GM12878 (cell line): ENCODE measurements at regions of chr17 and their contacts with region 1.

Region 1: GRCh38 chr17:7444682-7445618 is at the start of gene CHRNB1:
- DNase-seq: no peak
- ATAC-seq: peak; percentile 71
- H3K4me3 ChIP-seq: peak within 1 kb of the TSS; percentile 55; the same call in 1 of the 2 replicates
- H3K27ac ChIP-seq: no peak within 1 kb of the TSS
- H3K4me1 ChIP-seq: peaks cover 16% of the 10 kb centered on the region
- H3K27me3 ChIP-seq: peaks cover 1 to 5% of the 10 kb centered on the region in 2 experiments; a peak in 3 of 4 replicates
- CTCF ChIP-seq: peak in 1 of 3 experiments; percentile 11; a peak in 1 of 6 replicates
- EP300 ChIP-seq: no peak
- POLR2A ChIP-seq: no peak
- RAD21 ChIP-seq: no peak
- polyA plus RNA-seq, gene CHRNB1: 13.2 to 14.8 TPM

Region 2: DNA sequence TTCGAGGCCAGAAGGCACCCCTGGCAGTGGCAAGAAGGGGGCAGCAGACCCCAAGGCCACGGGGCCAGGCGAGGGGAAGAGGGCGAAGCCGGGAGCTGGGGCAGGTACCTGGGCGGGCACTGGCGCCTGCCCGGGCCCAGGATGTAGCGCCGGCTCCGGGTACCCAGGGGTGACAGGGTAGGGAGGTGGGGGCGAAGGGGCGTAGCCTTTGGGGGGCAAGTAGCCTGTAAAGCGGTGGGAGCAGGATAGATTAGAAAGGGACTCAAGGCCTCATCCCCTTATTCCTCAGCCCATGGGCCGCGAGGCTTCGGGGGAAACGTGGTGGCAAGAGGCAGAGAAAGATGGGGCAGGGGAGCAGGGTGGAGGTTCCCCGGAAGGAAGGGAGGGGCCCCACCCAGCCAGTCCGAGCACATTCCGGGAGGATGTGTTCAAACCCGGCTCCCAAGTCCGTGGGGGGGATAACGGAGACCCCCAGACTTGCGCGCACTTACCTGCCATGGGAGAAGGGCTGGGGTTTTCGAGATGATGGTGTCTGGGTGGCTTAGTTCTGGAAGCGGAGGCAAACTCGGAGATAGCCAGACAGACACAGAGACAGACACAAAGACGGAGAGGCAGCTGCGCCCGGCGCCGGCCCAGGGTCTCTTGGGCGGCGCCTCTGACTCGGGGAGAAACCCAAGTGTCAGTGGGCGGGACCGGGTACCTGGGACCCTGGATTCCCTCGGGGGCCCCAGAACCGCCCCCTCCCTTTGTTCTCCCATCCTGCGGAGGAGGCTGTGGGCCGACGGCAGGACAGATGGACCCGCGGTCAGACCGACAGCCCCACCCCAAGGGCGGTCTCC is 51.1 kb before region 1 on chr17:
- CTCF ChIA-PET with region 1: no interaction called
- POLR2A ChIA-PET with region 1: no interaction called
- RAD21 ChIA-PET with region 1: no interaction called
- SMC1A ChIA-PET with region 1: no interaction called
- in situ Hi-C with region 1: no loop called
- intact Hi-C with region 1: no loop called
- DNase-seq: no peak
- ATAC-seq: peak; percentile 70
- H3K4me3 ChIP-seq: peak overlapping the region; percentile 80
- H3K27ac ChIP-seq: peak overlapping the region; percentile 58
- H3K4me1 ChIP-seq: no peaks in the 10 kb centered on the region
- H3K27me3 ChIP-seq: no peaks in the 10 kb centered on the region
- CTCF ChIP-seq: 0 out of 6 replicates have a peak, but pooled peaks of 1 of the 3 experiments have one; percentile 11
- EP300 ChIP-seq: no peak
- POLR2A ChIP-seq: no peak; the same call in 1 of the 2 replicates
- RAD21 ChIP-seq: peak; percentile 39; the same call in 1 of the 2 replicates

Region 3: GRCh38 chr17:7403977-7404736 is 40.8 kb before region 1 on chr17 and contains the start of gene TMEM256:
- CTCF ChIA-PET with region 1: no interaction called
- POLR2A ChIA-PET with region 1: interaction called, 14 read pairs
- RAD21 ChIA-PET with region 1: interaction called, 3 read pairs
- SMC1A ChIA-PET with region 1: no interaction called
- in situ Hi-C with region 1: no loop called
- intact Hi-C with region 1: no loop called
- DNase-seq: peak; percentile 92
- ATAC-seq: peak; percentile 99
- H3K4me3 ChIP-seq: peak within 1 kb of the TSS; percentile 85
- H3K27ac ChIP-seq: peak within 1 kb of the TSS; percentile 80
- H3K4me1 ChIP-seq: peaks cover 3% of the 10 kb centered on the region; the same call in 1 of the 2 replicates
- H3K27me3 ChIP-seq: peaks cover 0 to 6% of the 10 kb centered on the region in 2 experiments; a peak in 2 of 4 replicates
- CTCF ChIP-seq: no peak
- EP300 ChIP-seq: no peak
- POLR2A ChIP-seq: peak; percentile 95
- RAD21 ChIP-seq: no peak
- polyA plus RNA-seq, gene TMEM256: 210 to 246 TPM

Region 4: GRCh38 chr17:7419819-7420610 is 24.9 kb before region 1 on chr17 and contains the start of gene SPEM1:
- CTCF ChIA-PET with region 1: no interaction called
- POLR2A ChIA-PET with region 1: no interaction called
- RAD21 ChIA-PET with region 1: no interaction called
- SMC1A ChIA-PET with region 1: no interaction called
- in situ Hi-C with region 1: no loop called
- intact Hi-C with region 1: no loop called
- DNase-seq: no peak
- ATAC-seq: no peak
- H3K4me3 ChIP-seq: no peak within 1 kb of the TSS
- H3K27ac ChIP-seq: no peak within 1 kb of the TSS
- H3K4me1 ChIP-seq: no peaks in the 10 kb centered on the region
- H3K27me3 ChIP-seq: no peaks in the 10 kb centered on the region; a peak in 1 of 4 replicates
- CTCF ChIP-seq: no peak
- EP300 ChIP-seq: no peak
- POLR2A ChIP-seq: no peak
- RAD21 ChIP-seq: no peak
- polyA plus RNA-seq, gene SPEM1: not detected

Region 5: DNA sequence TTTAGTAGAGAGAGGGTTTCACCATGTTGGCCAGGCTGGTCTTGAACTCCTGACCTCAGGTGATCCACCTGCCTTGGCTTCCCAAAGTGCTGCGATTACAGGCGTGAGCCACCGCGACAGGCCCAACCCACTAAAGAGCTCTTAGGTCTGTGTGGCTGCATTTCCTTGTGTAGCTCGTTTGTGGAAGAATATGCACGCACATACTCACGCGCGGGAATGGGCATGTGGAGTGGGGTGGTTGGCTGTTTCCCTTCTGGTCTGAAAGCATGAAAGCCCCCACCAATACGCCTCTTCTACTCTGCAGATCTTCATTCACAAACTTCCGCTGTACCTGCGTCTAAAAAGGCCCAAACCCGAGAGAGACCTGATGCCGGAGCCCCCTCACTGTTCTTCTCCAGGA is 10.0 kb after region 1 on chr17:
- CTCF ChIA-PET with region 1: interaction called, 20 read pairs
- POLR2A ChIA-PET with region 1: interaction called, 52 read pairs
- RAD21 ChIA-PET with region 1: interaction called, 6 read pairs
- SMC1A ChIA-PET with region 1: interaction called, 8 read pairs
- in situ Hi-C with region 1: no loop called
- intact Hi-C with region 1: no loop called
- DNase-seq: no peak
- ATAC-seq: no peak
- H3K4me3 ChIP-seq: peak overlapping the region; percentile 83; the same call in 1 of the 2 replicates
- H3K27ac ChIP-seq: no peak overlapping the region
- H3K4me1 ChIP-seq: peaks cover 6% of the 10 kb centered on the region
- H3K27me3 ChIP-seq: no peaks in the 10 kb centered on the region
- CTCF ChIP-seq: no peak
- EP300 ChIP-seq: no peak
- POLR2A ChIP-seq: no peak
- RAD21 ChIP-seq: no peak